Adrenal gland (tissue), 19 donors: ENCODE measurements at regions of chr1 and their contacts with region 1.

Region 1: DNA sequence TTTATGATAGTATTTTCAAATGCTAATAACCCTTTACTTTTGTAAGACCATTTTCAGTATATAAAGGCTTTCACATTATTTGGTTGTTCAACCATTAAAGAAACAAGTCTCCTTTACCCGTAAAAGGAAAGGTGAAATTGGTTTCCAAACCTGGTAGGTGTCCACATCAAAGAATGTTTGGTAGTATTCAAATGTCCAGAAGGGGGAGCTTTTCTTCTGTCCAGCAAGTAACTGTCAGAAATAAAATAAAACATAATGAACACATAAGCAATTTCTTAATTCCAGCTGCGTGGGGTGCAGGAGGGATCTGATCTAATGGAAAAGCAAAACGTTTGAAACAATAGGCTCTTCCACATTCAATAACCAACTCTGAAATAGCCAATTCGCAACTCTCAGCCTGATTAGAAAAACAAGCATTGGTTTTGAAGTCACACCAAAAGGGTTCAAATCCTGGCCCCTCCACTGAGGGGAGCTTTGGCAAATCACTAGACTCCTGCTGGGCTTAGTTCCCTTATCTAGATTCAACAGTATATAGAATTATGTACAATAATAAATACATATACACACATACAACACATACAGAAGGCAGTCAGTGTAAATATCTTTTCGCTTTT is 11.0 kb downstream of the YIPF1 start:
- DNase-seq: peak in 1 of 7 donors; percentile 43
- H3K4me3 ChIP-seq: no peak overlapping the region
- H3K27ac ChIP-seq: no peak overlapping the region
- H3K4me1 ChIP-seq: no peaks in the 10 kb centered on the region
- H3K27me3 ChIP-seq: no peaks in the 10 kb centered on the region
- CTCF ChIP-seq: peak; percentile 36 to 77 (median 68)
- POLR2A ChIP-seq: no peak

Region 2: DNA sequence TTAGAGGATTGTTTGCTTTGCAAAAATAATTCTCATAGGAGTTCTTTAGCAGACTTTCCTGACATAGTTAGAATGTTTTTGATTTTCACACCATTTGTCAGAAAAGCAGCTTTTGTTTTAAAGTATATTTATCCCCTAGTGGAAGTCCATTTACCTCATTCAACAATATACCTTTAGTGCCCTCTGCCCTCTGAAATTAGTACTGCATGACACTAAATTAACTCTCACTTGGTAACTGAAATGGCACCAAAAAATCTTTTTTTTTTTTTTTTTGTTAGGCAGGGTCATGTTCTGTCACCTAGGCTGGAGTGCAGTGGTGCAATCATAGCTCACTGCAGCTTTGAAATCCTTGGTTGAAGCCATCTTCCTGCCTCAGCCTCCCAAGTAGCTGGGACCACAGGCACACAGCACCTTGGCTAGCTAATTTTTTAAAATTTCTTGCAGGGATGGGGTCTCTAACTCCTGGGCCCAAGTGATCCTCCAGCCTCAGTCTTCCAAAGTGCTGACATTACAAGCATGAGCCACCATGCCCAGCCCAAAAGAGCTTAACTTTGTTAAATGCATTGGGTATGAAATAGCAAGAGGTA is 81.2 kb after region 1 on chr1:
- intact Hi-C with region 1: loop called (anchors 5 kb)
- DNase-seq: no peak
- H3K4me3 ChIP-seq: no peak overlapping the region
- H3K27ac ChIP-seq: no peak overlapping the region
- H3K4me1 ChIP-seq: peaks cover 19 to 45% of the 10 kb centered on the region in 2 donors
- H3K27me3 ChIP-seq: no peaks in the 10 kb centered on the region
- CTCF ChIP-seq: peak; percentile 38 to 85 (median 64)
- POLR2A ChIP-seq: no peak

Region 3: GRCh38 chr1:54037476-54037875 is 158.9 kb after region 1 on chr1:
- intact Hi-C with region 1: loop called in 1 of 2 experiments (anchors 10 kb)
- DNase-seq: no peak
- H3K4me3 ChIP-seq: no peak overlapping the region
- H3K27ac ChIP-seq: no peak overlapping the region
- H3K4me1 ChIP-seq: no peaks in the 10 kb centered on the region
- H3K27me3 ChIP-seq: no peaks in the 10 kb centered on the region
- CTCF ChIP-seq: no peak
- POLR2A ChIP-seq: no peak